PC-9 (cell line): ENCODE measurements at regions of chr1 and their contacts with region 1.

Region 1: GRCh38 chr1:161132410-161133219 is at the start of gene DEDD:
- DNase-seq: peak; percentile 84 to 92
- H3K4me3 ChIP-seq: peak within 1 kb of the TSS; percentile 66
- H3K27ac ChIP-seq: peak within 1 kb of the TSS; percentile 91
- H3K4me1 ChIP-seq: peaks cover 33% of the 10 kb centered on the region
- H3K27me3 ChIP-seq: no peaks in the 10 kb centered on the region
- CTCF ChIP-seq: no peak
- total RNA-seq, gene DEDD: 26.7 and 29.8 TPM in 2 replicates

Region 2: GRCh38 chr1:161177112-161177935 is 44.7 kb after region 1 on chr1 and contains the start of gene B4GALT3:
- CTCF ChIA-PET with region 1: no interaction called
- POLR2A ChIA-PET with region 1: interaction called, 3 read pairs
- intact Hi-C with region 1: loop called (anchors 1 kb)
- DNase-seq: peak; percentile 64 to 91
- H3K4me3 ChIP-seq: peak within 1 kb of the TSS; percentile 83
- H3K27ac ChIP-seq: peak within 1 kb of the TSS; percentile 61
- H3K4me1 ChIP-seq: peaks cover 19% of the 10 kb centered on the region
- H3K27me3 ChIP-seq: no peaks in the 10 kb centered on the region
- CTCF ChIP-seq: peak; percentile 49; the same call in 1 of the 2 replicates
- total RNA-seq, gene B4GALT3: 35.5 and 47.8 TPM in 2 replicates